Head of caudate nucleus (tissue), 42 donors: ENCODE measurements at regions of chr11 and their contacts with region 1.

Region 1: DNA sequence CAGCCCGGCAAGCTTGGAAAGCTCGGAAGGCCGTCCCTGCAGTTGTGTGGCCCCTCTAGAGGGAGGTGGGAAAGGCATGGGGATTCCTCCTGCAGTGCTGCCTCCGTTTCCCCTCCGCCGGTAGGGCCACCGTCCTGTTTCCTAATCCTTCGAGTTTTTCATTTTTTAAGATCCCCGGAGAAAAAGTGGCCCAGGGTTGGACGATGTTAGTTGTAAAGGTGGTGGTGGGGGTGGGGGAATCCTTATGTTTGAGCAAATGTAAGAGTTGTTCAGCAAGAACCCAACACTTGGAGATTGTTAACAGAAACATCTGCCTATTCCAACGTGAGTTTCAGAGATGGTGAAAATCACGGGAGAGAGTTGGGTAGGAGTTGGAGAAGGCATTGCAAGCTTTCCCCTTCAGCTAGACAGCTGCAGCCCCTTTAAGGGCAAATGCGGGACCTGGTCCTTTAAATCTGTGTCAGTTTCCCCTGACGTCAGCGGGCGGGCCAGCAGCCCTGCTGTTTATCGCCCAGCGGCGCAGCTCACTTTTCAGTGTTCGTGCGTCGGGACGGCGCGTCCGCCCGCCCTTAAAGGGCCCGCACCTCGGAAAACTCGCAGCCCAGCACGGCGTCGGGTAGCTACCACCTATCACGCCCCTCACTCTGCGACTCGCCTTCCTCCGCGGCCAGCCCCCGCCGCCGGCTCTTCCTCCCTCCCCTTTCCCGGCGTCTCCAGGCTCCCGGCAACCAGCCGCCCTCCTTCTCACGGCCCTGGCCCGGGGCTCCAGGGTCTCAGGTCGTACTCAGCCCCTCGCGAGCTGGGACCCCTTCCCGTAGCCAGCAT is at the start of gene SIDT2:
- DNase-seq: peak; percentile 93 to 98 (median 96)

Region 2: GRCh38 chr11:116861539-116861938 is 316.9 kb before region 1 on chr11:
- intact Hi-C with region 1: no loop called
- DNase-seq: no peak

Region 3: DNA sequence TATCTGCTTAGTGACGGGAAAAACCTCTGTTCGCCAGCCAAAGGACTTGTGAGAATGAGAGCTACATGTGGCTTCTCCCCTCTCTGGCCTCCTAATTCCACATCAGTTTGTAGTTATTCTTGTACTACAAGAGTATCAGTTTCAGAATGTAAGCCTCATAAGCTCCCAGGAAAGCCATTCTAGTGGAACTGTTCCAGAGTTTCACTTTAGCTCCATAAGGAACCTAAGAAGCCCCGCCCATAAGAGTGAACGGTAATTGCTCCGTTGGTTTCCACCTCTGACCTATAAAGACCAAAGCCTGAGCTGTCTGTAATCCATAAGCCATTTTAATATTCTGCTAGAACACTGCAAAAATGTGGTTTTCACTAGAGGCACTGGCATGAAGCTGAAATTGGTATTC is 133.2 kb before region 1 on chr11:
- intact Hi-C with region 1: no loop called
- DNase-seq: no peak

Region 4: GRCh38 chr11:117143871-117144476 is 34.4 kb before region 1 on chr11 and contains the start of gene PAFAH1B2:
- intact Hi-C with region 1: loop called (anchors 2 kb)
- DNase-seq: peak; percentile 90 to 98 (median 96)

Region 5: DNA sequence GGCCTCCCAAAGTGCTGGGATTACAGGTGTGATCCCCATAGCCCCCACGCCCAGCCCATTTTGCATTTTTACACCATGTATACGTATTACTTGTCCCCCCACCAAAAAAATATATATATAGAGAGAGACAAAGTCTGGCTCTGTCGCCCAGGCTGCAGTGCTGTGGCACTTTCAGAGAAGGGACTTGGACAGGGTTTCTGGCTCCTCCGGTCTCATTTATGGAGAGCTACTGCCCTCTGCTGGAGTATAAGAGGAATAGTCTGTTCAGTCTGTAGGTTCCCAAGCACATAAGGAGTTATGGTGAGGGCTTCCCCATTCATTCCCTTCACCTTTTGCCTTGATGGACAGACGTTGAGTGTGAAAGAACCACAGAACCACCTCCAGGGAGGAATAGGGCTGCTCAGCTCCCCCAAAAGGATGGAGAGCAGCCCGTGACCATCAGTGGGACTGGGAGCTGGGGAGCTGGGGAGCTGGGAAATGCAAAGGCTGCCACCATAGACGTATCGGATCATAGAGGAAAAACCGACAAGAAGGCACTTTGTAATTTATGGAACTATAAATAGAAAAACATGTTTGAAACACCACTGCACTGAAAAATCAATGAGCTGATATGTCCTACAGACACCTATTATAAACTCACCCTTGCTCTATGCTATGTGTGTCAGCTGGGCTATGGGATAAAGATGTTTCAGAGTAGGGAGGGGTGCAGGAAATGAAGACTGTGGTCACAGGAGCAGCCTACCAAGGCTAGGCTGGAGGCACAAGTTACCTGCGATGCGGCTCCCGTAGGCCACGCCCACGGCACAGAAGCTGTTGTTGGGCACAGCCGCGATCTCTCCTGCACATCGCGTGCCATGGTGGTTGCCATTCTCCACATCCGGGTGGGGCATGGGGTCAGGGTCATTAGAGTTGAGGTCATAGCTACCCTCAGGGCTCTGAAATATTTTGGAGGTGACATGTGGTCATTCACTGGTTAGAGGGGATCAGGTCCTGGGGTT is 48.3 kb after region 1 on chr11:
- intact Hi-C with region 1: loop called (anchors 2 kb)
- DNase-seq: peak in 35 of 42 donors; percentile 17 to 87 (median 63)